ENCODE measurements at regions of chr14 and their contacts with region 1.

Region 1: DNA sequence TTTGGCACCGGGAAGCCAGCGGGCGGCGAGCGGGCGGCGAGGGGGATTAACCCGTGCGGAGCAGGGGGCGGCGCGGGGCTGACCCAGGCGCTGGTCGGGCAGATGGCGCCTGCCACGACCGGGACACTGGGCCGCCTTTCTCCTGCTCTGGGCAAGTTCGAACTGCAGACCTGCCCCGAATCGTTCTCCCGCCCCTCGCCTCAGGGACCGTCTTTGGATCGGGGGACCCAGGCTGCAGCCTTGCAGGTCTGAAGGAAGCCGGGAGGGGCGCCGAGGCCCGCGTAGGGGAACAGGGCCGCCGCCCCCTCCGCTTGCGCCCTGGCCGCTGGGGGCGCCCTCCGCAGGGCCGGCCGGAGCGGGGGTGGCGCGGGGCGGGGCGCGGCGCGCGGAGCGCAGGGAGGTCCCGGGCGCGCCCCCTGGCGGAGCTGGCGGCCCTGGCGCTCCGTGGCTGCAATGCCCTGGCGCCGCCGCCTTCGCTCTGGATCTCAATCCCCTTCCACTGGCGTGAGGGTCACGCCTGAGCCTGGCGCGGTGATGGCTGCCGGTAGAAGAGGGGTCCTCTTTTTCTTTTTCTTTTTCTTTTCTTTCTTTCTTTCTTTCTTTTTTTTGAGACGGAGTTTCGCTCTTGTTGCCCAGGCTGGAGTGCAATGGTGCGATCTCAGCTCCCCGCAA is 449 bp upstream of the LTBP2 start:
- DNase-seq: peak; percentile 89 to 94
- ATAC-seq: peak; percentile 83 to 96 (median 89)
- H3K4me3 ChIP-seq: peak overlapping the region; percentile 54
- H3K4me3 Mint-ChIP-seq: peak overlapping the region; percentile 84
- H3K27ac ChIP-seq: no peak overlapping the region
- H3K27ac Mint-ChIP-seq: no peak overlapping the region
- H3K4me1 ChIP-seq: peaks cover 56% of the 10 kb centered on the region
- H3K4me1 Mint-ChIP-seq: peaks cover 50 to 63% of the 10 kb centered on the region in 2 donors
- H3K27me3 ChIP-seq: no peaks in the 10 kb centered on the region
- H3K27me3 Mint-ChIP-seq: no peaks in the 10 kb centered on the region
- CTCF ChIP-seq: peak; percentile 58

Region 2: GRCh38 chr14:74638066-74638465 is 25.6 kb after region 1 on chr14:
- intact Hi-C with region 1: loop called (anchors 1 kb)
- DNase-seq: peak in 1 of 2 donors; percentile 33
- ATAC-seq: peak in 2 of 3 donors; percentile 71 to 73
- H3K4me3 ChIP-seq: no peak overlapping the region
- H3K4me3 Mint-ChIP-seq: no peak overlapping the region
- H3K27ac ChIP-seq: no peak overlapping the region
- H3K27ac Mint-ChIP-seq: peak overlapping the region in 1 of 2 donors; percentile 73
- H3K4me1 ChIP-seq: no peaks in the 10 kb centered on the region
- H3K4me1 Mint-ChIP-seq: peaks cover 0 to 25% of the 10 kb centered on the region in 2 donors
- H3K27me3 ChIP-seq: no peaks in the 10 kb centered on the region
- H3K27me3 Mint-ChIP-seq: peaks cover 0 to 9% of the 10 kb centered on the region in 2 donors
- CTCF ChIP-seq: no peak

Region 3: DNA sequence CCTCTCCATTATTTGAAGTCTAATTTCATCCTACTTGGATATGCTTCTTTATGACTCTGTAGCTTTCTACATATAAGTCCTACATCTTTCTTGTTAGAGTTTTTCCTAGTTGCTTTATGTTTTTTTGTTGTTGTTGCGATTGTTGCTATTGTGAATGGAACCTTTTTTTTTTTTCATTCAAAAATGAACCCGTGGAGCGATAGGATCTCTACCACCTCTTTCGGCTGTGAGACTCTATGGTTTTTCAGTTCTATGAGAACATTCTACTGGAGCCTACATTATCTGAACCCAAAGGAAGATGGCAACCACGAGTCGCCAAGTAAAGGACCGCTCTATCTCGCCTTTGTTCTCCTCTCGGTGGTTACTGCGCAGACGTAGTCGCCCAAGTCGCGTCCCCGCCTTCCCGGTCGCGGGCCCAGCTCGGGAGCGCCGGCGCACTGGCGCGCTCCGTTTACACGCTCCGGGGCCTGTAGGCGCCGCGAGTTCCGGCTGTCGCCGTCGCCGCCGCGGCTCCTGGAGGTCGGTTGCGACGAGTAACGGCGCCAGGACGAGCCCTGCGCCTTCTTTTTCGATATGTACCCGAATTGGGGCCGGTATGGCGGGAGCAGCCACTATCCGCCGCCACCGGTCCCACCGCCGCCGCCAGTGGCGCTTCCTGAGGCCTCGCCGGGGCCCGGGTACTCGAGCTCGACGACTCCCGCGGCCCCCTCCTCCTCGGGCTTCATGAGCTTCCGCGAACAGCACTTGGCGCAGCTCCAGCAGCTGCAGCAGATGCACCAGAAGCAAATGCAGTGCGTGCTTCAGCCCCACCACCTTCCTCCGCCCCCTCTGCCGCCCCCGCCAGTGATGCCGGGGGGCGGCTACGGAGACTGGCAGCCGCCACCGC is 150.7 kb after region 1 on chr14 and contains the start of gene YLPM1:
- intact Hi-C with region 1: loop called (anchors 2 kb)
- DNase-seq: peak; percentile 87 to 98
- ATAC-seq: peak; percentile 94 to 99 (median 95)
- H3K4me3 ChIP-seq: peak within 1 kb of the TSS; percentile 96
- H3K4me3 Mint-ChIP-seq: peak within 1 kb of the TSS; percentile 92
- H3K27ac ChIP-seq: peak within 1 kb of the TSS; percentile 93
- H3K27ac Mint-ChIP-seq: peak within 1 kb of the TSS; percentile 91 to 94
- H3K4me1 ChIP-seq: peaks cover 13% of the 10 kb centered on the region
- H3K4me1 Mint-ChIP-seq: peaks cover 45 to 46% of the 10 kb centered on the region in 2 donors
- H3K27me3 ChIP-seq: no peaks in the 10 kb centered on the region
- H3K27me3 Mint-ChIP-seq: peaks cover 0 to 2% of the 10 kb centered on the region in 2 donors
- CTCF ChIP-seq: peak; percentile 57
- total RNA-seq, gene YLPM1: 86.1 to 101 (median 93.3) TPM

Region 4: DNA sequence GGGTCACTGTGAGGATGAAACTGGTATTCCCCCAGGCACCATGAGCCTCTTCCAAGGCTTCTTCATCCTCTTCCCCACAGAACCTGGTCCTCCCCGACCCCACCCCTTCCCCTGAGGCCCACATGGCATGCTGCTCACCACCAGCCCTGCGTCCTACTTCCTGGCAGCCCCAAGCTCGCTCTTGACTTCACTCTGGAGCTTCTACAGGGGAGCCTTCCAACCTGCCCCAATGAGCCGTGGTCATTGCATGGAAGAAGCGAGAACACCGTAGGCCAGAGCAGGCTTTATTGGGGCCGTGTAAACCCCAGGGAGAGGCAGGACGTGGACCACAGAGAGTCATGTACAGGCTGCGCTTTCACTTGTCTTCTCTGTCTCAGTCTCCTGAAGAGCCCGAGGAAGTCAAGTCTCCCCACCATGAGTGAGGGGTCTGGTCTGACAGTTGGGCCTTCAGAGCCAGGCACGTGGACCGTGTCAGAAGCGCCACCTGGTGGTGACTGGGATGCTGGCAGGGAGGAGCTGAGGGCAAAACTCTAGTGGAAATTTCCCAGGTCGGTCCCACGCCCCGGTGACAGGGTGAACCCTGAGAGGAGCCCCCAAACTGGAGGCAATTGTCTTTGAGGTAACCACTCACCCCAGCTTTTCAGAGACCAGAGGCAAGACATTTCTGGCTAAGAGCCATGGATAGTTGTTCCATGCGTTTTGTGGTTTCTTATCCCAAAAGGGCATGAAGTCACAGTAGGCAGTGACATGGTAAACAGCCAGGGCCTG is 293.1 kb after region 1 on chr14:
- intact Hi-C with region 1: loop called (anchors 1 kb)
- DNase-seq: peak; percentile 76 to 89
- ATAC-seq: peak; percentile 60 to 82 (median 76)
- H3K4me3 ChIP-seq: no peak overlapping the region
- H3K4me3 Mint-ChIP-seq: no peak overlapping the region
- H3K27ac ChIP-seq: no peak overlapping the region
- H3K27ac Mint-ChIP-seq: peak overlapping the region; percentile 52 to 53
- H3K4me1 ChIP-seq: peaks cover 24% of the 10 kb centered on the region
- H3K4me1 Mint-ChIP-seq: peaks cover 0 to 6% of the 10 kb centered on the region in 2 donors
- H3K27me3 ChIP-seq: no peaks in the 10 kb centered on the region
- H3K27me3 Mint-ChIP-seq: no peaks in the 10 kb centered on the region
- CTCF ChIP-seq: peak; percentile 82

Region 5: DNA sequence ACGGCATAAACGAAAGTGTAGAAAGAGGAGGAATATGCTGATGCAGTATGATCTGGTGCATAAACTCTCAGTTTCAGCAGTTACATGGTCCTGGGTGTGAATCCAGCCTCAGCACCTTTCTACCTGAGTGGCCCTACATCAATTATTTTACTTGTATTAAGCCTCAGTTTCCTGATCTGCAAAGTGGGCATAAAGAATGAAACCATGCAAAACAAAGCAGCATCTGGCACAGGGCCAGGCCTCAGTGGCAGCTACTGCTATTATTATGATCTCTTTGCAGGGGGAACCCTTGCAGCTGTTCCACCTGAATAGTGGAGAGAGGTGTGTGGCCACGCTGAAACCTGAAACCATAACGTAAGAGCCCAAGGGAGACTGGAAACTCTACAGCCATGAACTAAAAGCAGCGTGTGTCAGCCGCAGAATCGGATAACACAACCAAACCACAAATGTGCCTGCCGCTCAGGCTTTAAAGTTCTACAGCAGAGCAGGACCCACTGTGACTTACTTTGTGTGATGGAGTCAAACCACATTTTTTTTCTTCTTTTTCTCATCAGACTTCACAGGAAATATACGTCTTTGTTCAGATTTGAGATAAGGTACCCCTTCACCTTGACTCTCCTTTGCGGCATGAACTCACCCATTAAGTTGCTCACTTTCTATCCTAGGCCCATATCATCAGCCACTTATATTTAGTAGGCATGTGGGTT is 636.9 kb after region 1 on chr14:
- intact Hi-C with region 1: loop called (anchors 10 kb)
- DNase-seq: peak; percentile 76 to 95
- ATAC-seq: peak; percentile 68 to 84 (median 80)
- H3K4me3 ChIP-seq: no peak overlapping the region
- H3K4me3 Mint-ChIP-seq: peak overlapping the region; percentile 84
- H3K27ac ChIP-seq: peak overlapping the region; percentile 88
- H3K27ac Mint-ChIP-seq: peak overlapping the region; percentile 90 to 93
- H3K4me1 ChIP-seq: peaks cover 61% of the 10 kb centered on the region
- H3K4me1 Mint-ChIP-seq: peaks cover 58% of the 10 kb centered on the region in 2 donors
- H3K27me3 ChIP-seq: no peaks in the 10 kb centered on the region
- H3K27me3 Mint-ChIP-seq: no peaks in the 10 kb centered on the region
- CTCF ChIP-seq: no peak

Measured in natural killer cell (primary cell).